Left lung (tissue), 14 donors: ENCODE measurements at regions of chr10 and their contacts with region 1.

Region 1: DNA sequence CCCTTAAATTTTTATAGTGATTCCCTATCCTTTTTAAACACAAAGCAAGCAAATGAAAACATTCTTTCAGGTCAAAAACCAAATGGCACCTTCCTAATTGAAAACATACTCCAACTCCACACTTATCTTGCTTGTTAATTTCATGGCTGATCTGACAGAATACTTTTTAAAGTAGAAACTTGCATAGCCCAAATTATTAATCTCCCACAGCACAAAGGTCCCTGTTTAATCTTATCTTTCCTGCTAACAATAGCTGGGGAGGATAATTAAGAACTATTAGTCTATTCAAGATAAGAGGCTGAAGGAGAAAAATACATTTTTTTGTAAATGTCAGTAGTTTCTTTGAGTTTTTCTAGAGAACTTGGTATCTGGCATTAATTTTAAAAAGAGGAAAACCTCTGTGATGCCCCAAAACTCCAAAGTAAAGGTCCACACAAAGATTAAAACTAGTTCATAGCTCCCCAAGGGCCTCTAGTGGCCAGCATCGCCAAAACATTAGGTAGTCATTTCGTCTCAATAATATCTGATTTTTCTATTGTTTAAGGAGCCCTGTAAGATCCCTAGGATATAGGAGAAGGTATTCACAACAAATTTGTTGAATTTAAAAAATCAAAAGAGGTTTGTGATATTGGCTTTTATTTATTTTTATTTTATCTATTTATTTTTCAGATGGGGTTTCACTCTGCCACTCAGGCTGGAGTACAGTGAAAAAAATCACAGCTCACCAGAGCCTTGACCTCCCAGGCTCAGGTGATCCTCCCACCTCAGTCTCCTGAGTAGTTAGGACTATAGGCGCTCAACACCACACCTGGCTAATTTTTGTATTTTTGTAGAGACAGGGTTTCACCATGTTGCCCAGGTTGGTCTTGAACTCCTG is 14.7 kb downstream of the CDNF start:
- DNase-seq: peak in 1 of 4 donors; percentile 58
- ATAC-seq: peak; percentile 75
- H3K4me3 ChIP-seq: no peak overlapping the region
- H3K27ac ChIP-seq: no peak overlapping the region
- H3K4me1 ChIP-seq: peaks cover 0 to 5% of the 10 kb centered on the region in 2 donors
- H3K27me3 ChIP-seq: no peaks in the 10 kb centered on the region
- CTCF ChIP-seq: peak; percentile 47 to 50

Region 2: GRCh38 chr10:14507176-14507575 is 315.9 kb before region 1 on chr10:
- intact Hi-C with region 1: loop called in 1 of 2 experiments (anchors 10 kb)
- DNase-seq: peak in 1 of 4 donors; percentile 21
- ATAC-seq: no peak
- H3K4me3 ChIP-seq: no peak overlapping the region
- H3K27ac ChIP-seq: no peak overlapping the region
- H3K4me1 ChIP-seq: no peaks in the 10 kb centered on the region
- H3K27me3 ChIP-seq: no peaks in the 10 kb centered on the region
- CTCF ChIP-seq: no peak